Activated naive CD4-positive, alpha-beta T cell treated with anti-CD3 and anti-CD28 coated beads for 36 hours (primary cell): ENCODE measurements at regions of chr4 and their contacts with region 1.

Region 1: DNA sequence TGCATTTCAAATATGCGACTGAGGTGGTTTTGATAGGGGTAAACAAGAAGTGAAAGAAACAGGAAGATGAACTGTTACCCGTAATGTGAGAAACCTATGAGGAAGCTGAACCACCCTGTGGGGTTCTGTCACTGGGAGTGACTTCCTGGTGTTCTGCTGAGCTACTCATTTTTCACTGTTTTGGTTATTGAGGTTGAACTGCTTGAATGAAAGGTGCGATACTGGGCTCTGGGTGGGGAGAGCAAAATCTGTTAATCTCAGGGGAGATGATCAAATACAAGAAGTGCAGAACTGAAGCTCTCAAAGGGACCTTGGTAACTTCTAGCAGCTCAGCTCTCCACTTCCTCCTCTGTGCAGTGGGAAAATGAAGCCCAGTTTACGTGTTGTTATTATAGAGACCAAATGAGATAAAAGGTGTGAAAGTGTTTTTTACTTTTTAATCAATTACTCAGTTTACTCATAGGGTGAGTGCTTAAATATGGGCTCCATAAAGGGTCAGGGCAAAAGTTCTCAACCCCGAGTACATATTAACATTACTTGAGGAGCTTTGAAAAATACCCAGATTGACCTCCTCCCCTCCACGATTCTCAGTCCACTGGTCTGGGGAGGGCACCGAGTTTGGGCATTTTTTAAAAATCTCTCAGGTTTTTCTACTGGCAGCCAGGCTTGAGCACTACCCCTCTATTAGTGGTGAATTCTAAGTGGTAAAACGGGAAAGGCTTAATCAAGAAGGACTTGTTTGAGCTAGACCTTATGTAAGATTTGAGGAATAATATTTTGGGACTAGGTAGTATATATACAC is 66.7 kb downstream of the COQ2 start:
- DNase-seq: peak; percentile 82
- H3K4me3 Mint-ChIP-seq: peak overlapping the region; percentile 28
- H3K27ac Mint-ChIP-seq: peak overlapping the region; percentile 92
- H3K4me1 Mint-ChIP-seq: peaks cover 65% of the 10 kb centered on the region
- H3K27me3 Mint-ChIP-seq: no peaks in the 10 kb centered on the region

Region 2: GRCh38 chr4:82428969-82429727 is 788.8 kb before region 1 on chr4:
- CTCF ChIA-PET with region 1: no interaction called
- intact Hi-C with region 1: loop called (anchors 10 kb)
- DNase-seq: peak; percentile 92
- H3K4me3 Mint-ChIP-seq: peak overlapping the region; percentile 93
- H3K27ac Mint-ChIP-seq: peak overlapping the region; percentile 99
- H3K4me1 Mint-ChIP-seq: peaks cover 64% of the 10 kb centered on the region
- H3K27me3 Mint-ChIP-seq: no peaks in the 10 kb centered on the region

Region 3: GRCh38 chr4:83074086-83074704 is 143.7 kb before region 1 on chr4:
- CTCF ChIA-PET with region 1: interaction called, 4 read pairs
- intact Hi-C with region 1: loop called (anchors 1 kb)
- DNase-seq: peak; percentile 76
- H3K4me3 Mint-ChIP-seq: no peak overlapping the region
- H3K27ac Mint-ChIP-seq: no peak overlapping the region
- H3K4me1 Mint-ChIP-seq: peaks cover 13% of the 10 kb centered on the region
- H3K27me3 Mint-ChIP-seq: no peaks in the 10 kb centered on the region

Region 4: DNA sequence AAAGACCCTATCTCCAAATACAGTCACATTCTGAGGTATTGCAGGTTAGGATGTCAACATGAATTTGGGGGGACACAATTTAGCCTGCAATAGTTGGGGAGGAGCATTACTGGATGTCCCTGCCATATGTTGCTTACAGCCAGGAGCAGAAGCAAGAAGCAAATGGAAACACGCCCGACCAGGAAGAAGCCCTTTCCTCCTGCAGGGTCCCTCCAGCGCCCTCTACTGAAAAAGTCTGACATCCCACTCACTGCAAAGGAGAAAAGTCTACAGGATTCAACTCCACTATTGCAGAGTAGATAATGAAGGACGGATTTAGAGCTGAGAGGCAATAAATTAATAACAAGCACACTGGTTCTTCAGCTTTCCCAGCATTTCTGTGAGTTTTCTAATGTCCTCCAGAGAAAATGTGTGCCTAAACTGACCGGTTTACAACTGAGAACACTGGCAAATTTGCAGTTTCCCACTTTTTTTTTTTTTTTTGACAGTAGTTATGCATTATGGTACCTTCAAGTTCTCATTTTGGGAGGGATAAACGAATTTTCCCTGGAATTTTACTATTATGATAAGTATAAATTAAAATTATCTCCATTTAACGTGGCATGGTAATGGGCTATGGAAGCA is 35.0 kb after region 1 on chr4:
- CTCF ChIA-PET with region 1: interaction called, 24 read pairs
- intact Hi-C with region 1: loop called (anchors 1 kb)
- DNase-seq: peak; percentile 90
- H3K4me3 Mint-ChIP-seq: no peak overlapping the region
- H3K27ac Mint-ChIP-seq: no peak overlapping the region
- H3K4me1 Mint-ChIP-seq: peaks cover 6% of the 10 kb centered on the region
- H3K27me3 Mint-ChIP-seq: no peaks in the 10 kb centered on the region

Region 5: DNA sequence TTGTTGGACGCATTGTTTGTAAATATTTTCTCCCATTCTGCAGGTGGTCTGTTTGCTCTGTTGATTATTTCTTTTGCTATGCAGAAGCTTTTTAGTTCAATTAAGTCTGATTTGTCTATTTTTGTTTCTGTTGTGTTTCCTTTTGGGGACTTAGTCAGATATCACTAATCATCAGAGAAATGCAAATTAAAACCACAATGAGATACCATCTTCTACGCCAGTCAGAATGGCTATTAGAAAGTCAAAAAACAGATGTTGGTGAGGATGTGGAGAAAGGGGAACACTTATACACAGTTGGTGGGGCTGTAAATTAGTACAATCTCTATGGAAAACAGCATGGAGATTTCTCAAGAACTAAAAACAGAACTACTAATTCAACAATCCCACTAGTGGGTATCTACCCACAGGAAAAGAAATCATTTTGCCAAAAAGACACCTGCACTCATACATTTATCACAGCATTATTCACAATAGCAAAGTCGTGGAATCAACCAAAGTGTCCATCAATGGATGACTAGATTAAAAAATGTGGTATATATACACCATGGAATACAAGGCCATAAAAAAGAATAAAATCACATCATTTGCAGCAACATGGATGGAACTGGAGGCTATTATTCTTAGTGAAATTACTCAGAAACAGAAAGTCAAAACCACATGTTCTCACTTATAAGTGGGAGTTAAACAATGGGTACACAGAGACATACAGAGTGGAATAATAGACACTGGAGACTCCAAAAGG is 58.5 kb after region 1 on chr4:
- CTCF ChIA-PET with region 1: no interaction called
- intact Hi-C with region 1: no loop called
- DNase-seq: no peak
- H3K4me3 Mint-ChIP-seq: no peak overlapping the region
- H3K27ac Mint-ChIP-seq: no peak overlapping the region
- H3K4me1 Mint-ChIP-seq: peaks cover 21% of the 10 kb centered on the region
- H3K27me3 Mint-ChIP-seq: no peaks in the 10 kb centered on the region

Region 6: DNA sequence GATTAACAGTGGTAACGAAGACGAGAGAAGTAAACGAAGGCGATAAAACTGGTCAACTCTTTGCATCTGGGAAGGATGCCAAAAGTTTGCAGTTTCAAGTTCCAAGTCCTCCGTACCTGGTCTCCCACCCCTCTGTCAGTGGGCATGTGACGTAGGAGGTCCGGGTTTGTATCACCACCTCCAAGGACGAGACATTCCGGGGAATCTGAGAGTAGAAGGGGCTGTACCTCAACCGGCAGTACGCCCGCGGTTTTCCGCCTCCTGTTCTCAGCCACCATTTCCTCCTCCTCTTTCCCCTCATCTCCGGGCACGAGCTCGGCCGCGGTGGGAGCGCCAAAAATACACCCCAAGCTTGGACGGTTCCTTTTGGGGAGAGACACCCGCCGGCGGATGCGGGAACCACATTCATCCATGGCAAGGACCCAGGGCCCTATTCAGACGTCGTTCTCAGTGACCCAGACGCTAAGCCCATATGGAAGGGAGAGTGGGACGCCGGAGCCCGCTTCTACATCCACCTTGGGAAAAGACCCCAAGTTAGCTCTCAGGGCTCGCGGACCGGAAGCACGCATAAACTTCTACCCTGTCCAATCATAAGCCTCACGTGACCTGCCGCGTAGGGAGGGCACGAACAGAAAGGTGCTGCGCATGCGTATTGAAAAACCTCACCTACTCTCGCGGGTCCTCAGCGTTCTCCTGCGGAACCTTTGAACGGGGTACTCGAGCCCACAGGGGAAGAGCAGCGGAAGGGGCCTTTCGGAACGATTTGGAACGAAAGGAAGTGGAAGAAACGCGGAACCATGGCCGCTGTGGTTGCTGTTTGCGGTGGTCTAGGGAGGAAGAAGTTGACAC is 237.6 kb after region 1 on chr4 and contains the starts of genes HELQ and MRPS18C:
- CTCF ChIA-PET with region 1: no interaction called
- intact Hi-C with region 1: loop called (anchors 1 kb)
- DNase-seq: peak; percentile 98
- H3K4me3 Mint-ChIP-seq: peak within 1 kb of the TSS; percentile 100
- H3K27ac Mint-ChIP-seq: peak within 1 kb of the TSS; percentile 100
- H3K4me1 Mint-ChIP-seq: peaks cover 44% of the 10 kb centered on the region
- H3K27me3 Mint-ChIP-seq: no peaks in the 10 kb centered on the region
- total RNA-seq, gene HELQ: 7.9 to 10.9 TPM
- total RNA-seq, gene MRPS18C: 67.2 to 69.9 TPM